ENCODE measurements at regions of chr9 and their contacts with region 1.

Region 1: GRCh38 chr9:114385412-114386181 is 2.2 kb downstream of the AKNA start:
- DNase-seq: peak; percentile 91 to 98 (median 93)
- H3K4me3 ChIP-seq: peak overlapping the region; percentile 78 to 99
- H3K4me3 Mint-ChIP-seq: peak overlapping the region; percentile 95 to 100 (median 97)
- H3K27ac ChIP-seq: peak overlapping the region; percentile 88
- H3K27ac Mint-ChIP-seq: peak overlapping the region; percentile 96 to 99 (median 97)
- H3K4me1 ChIP-seq: peaks cover 79% of the 10 kb centered on the region
- H3K4me1 Mint-ChIP-seq: peaks cover 44 to 91% (median 66%) of the 10 kb centered on the region in 4 donors
- H3K27me3 ChIP-seq: no peaks in the 10 kb centered on the region
- H3K27me3 Mint-ChIP-seq: no peaks in the 10 kb centered on the region

Region 2: DNA sequence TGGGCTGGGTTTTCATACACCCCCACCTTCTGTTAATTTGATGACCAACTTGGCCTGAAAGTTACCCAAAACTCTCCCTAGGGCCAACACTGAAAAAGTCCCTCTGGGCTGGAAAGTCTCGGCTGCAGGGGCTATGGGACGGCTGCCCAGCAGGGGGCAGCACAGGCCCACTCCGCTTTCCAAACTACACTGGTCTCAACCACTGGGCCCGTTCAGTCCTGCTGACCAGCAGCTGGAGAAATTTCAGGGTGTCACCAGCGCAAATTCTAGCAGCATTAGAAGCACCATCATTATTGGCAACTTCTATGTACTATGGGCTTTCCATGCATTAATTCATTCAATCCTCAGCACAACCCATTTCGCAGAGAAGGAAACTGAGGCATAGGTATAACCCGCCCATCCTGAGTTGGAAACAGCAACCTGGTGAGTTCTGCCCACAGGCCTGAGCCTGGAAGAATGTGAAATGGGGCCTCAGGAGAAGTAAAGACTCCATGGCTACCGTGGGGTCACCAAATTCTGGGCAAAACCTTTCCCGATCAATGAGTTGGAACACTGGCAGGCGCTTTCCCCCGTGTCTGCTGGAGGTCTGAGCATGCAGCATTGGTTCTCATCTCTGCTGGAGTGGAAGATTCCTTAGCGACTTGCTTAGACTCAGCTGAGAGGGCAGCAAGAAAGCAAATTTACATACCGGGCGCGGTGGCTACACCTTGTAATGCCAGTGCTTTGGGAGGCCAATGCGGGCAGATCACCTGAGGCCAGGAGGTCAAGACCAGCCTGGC is 46.3 kb before region 1 on chr9:
- CTCF ChIA-PET with region 1: interaction called, 18 read pairs
- POLR2A ChIA-PET with region 1: interaction called, 1,614 read pairs
- intact Hi-C with region 1: loop called (anchors 1 kb)
- DNase-seq: peak in 4 of 5 donors; percentile 36 to 49 (median 42)
- H3K4me3 ChIP-seq: no peak overlapping the region
- H3K4me3 Mint-ChIP-seq: no peak overlapping the region
- H3K27ac ChIP-seq: no peak overlapping the region
- H3K27ac Mint-ChIP-seq: peak overlapping the region in 6 of 7 donors; percentile 36 to 73 (median 64)
- H3K4me1 ChIP-seq: no peaks in the 10 kb centered on the region
- H3K4me1 Mint-ChIP-seq: peaks cover 8 to 30% (median 14%) of the 10 kb centered on the region in 4 donors
- H3K27me3 ChIP-seq: no peaks in the 10 kb centered on the region
- H3K27me3 Mint-ChIP-seq: no peaks in the 10 kb centered on the region

Region 3: DNA sequence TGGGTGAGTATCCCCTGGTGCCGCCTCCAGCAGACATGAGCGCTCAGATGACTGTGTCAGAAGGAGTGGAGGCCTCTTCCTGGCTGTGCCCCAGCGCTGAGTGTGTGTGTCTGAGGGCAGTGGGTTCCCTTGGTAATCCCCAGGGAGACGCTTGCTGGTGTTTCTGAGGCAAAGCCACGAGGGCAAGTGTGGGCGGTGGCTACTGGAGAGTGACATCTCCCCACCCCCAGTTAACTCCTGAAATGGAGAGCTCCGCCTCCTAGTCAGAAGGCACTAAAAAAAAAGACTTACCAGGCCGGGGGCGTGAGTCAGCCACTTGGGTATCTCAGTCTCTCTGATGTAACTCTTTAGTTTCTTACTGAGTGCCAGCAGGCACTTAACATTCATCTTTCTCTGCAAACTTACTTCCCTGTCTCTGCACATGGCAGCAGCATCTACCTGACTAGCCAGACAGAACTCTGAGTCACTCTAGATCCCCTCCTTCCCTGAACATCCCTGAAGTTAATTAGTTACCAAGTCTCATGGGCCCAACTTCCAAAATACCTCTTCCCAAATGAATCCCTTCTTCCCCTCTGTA is 36.6 kb before region 1 on chr9:
- CTCF ChIA-PET with region 1: interaction called, 10 read pairs
- POLR2A ChIA-PET with region 1: interaction called, 1,614 read pairs
- intact Hi-C with region 1: loop called (anchors 2 kb)
- DNase-seq: peak in 3 of 5 donors; percentile 36 to 82 (median 37)
- H3K4me3 ChIP-seq: no peak overlapping the region
- H3K4me3 Mint-ChIP-seq: peak overlapping the region in 6 of 8 donors; percentile 17 to 47 (median 31)
- H3K27ac ChIP-seq: peak overlapping the region; percentile 30
- H3K27ac Mint-ChIP-seq: peak overlapping the region; percentile 84 to 95 (median 92)
- H3K4me1 ChIP-seq: peaks cover 42% of the 10 kb centered on the region
- H3K4me1 Mint-ChIP-seq: peaks cover 28 to 51% (median 35%) of the 10 kb centered on the region in 4 donors
- H3K27me3 ChIP-seq: no peaks in the 10 kb centered on the region
- H3K27me3 Mint-ChIP-seq: no peaks in the 10 kb centered on the region

Region 4: DNA sequence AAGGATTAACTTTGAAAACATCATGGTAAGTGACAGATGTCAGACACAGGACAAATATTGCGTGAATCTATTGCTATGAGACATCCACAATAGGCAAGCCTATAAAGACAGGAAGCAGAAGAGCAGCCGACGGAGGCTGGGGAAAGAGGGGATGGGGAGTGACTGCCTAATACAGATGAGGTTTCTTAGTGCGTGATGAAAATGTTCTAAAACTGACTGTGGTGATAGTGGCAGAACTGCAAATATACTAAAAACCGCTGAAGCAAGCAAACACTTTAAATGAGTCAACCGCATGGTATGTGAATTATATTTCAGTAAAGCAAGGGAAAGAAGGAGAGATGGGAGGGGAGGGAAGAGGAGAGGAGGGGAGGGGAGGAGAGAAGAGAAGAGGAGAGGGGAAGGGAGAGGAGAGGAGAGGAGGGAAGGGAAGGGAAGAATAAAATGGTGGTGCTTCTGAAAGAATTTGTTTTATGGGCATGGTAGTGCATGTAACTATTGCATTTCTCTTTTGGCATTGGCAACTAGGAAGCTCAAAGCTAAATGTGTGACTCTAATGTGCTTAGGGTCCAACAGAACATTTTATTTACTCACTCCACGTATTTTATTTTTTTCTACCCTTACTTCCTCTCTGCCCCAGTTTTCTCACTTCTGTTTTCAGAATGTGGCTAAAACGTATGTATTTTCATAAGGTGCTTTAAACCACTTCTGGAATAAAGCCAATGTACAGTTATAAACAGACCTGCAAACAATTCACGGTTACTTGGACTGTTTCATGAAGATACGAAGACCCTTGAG is 19.1 kb before region 1 on chr9:
- CTCF ChIA-PET with region 1: interaction called, 85 read pairs
- POLR2A ChIA-PET with region 1: interaction called, 1,614 read pairs
- intact Hi-C with region 1: loop called (anchors 1 kb)
- DNase-seq: peak; percentile 52 to 78 (median 61)
- H3K4me3 ChIP-seq: no peak overlapping the region
- H3K4me3 Mint-ChIP-seq: peak overlapping the region; percentile 57 to 80 (median 66)
- H3K27ac ChIP-seq: peak overlapping the region; percentile 62
- H3K27ac Mint-ChIP-seq: peak overlapping the region; percentile 78 to 97 (median 96)
- H3K4me1 ChIP-seq: peaks cover 99% of the 10 kb centered on the region
- H3K4me1 Mint-ChIP-seq: peaks cover 57 to 94% (median 80%) of the 10 kb centered on the region in 4 donors
- H3K27me3 ChIP-seq: no peaks in the 10 kb centered on the region
- H3K27me3 Mint-ChIP-seq: no peaks in the 10 kb centered on the region

Region 5: GRCh38 chr9:114372921-114373448 is 12.6 kb before region 1 on chr9:
- CTCF ChIA-PET with region 1: interaction called, 85 read pairs
- POLR2A ChIA-PET with region 1: interaction called, 1,614 read pairs
- intact Hi-C with region 1: loop called (anchors 1 kb)
- DNase-seq: peak; percentile 88 to 96 (median 91)
- H3K4me3 ChIP-seq: peak overlapping the region in 1 of 2 donors; percentile 57
- H3K4me3 Mint-ChIP-seq: peak overlapping the region; percentile 84 to 96 (median 88)
- H3K27ac ChIP-seq: peak overlapping the region; percentile 79
- H3K27ac Mint-ChIP-seq: peak overlapping the region; percentile 78 to 99 (median 96)
- H3K4me1 ChIP-seq: peaks cover 96% of the 10 kb centered on the region
- H3K4me1 Mint-ChIP-seq: peaks cover 58 to 97% (median 85%) of the 10 kb centered on the region in 4 donors
- H3K27me3 ChIP-seq: no peaks in the 10 kb centered on the region
- H3K27me3 Mint-ChIP-seq: no peaks in the 10 kb centered on the region

Region 6: GRCh38 chr9:114397848-114398605 is 12.4 kb after region 1 on chr9:
- CTCF ChIA-PET with region 1: interaction called, 67 read pairs
- POLR2A ChIA-PET with region 1: interaction called, 303 read pairs
- intact Hi-C with region 1: loop called (anchors 1 kb)
- DNase-seq: peak; percentile 92 to 96 (median 95)
- H3K4me3 ChIP-seq: peak overlapping the region; percentile 78 to 92
- H3K4me3 Mint-ChIP-seq: peak overlapping the region; percentile 92 to 99 (median 97)
- H3K27ac ChIP-seq: peak overlapping the region; percentile 92
- H3K27ac Mint-ChIP-seq: peak overlapping the region; percentile 93 to 99 (median 97)
- H3K4me1 ChIP-seq: peaks cover 45% of the 10 kb centered on the region
- H3K4me1 Mint-ChIP-seq: peaks cover 28 to 57% (median 43%) of the 10 kb centered on the region in 4 donors
- H3K27me3 ChIP-seq: no peaks in the 10 kb centered on the region
- H3K27me3 Mint-ChIP-seq: no peaks in the 10 kb centered on the region

Region 7: GRCh38 chr9:114505187-114506081 is 119.8 kb after region 1 on chr9 and contains the start of gene WHRN:
- CTCF ChIA-PET with region 1: interaction called, 3 read pairs
- POLR2A ChIA-PET with region 1: interaction called, 5 read pairs
- intact Hi-C with region 1: loop called (anchors 5 kb)
- DNase-seq: peak; percentile 91 to 95 (median 93)
- H3K4me3 ChIP-seq: peak within 1 kb of the TSS; percentile 62 to 63
- H3K4me3 Mint-ChIP-seq: peak within 1 kb of the TSS; percentile 83 to 90 (median 87)
- H3K27ac ChIP-seq: peak within 1 kb of the TSS; percentile 47
- H3K27ac Mint-ChIP-seq: peak within 1 kb of the TSS; percentile 89 to 97 (median 93)
- H3K4me1 ChIP-seq: peaks cover 22% of the 10 kb centered on the region
- H3K4me1 Mint-ChIP-seq: peaks cover 10 to 45% (median 32%) of the 10 kb centered on the region in 4 donors
- H3K27me3 ChIP-seq: peaks cover 4% of the 10 kb centered on the region
- H3K27me3 Mint-ChIP-seq: peaks cover 16 to 17% of the 10 kb centered on the region in 2 donors
- total RNA-seq, gene WHRN: 8.4 to 10.1 TPM

Measured in CD4-positive, alpha-beta memory T cell (primary cell).